Dorsolateral prefrontal cortex (tissue), 120 donors: ENCODE measurements at regions of chr12 and their contacts with region 1.

Region 1: GRCh38 chr12:108691175-108691997 is 39.9 kb downstream of the CORO1C start:
- DNase-seq: peak; percentile 76 to 99 (median 96)
- H3K4me3 ChIP-seq: peak overlapping the region in 58 of 59 donors; percentile 3 to 64 (median 41)
- H3K27ac ChIP-seq: peak overlapping the region; percentile 84 to 99 (median 95)
- H3K27me3 ChIP-seq: no peaks in the 10 kb centered on the region
- CTCF ChIP-seq: peak in 40 of 56 donors; percentile 9 to 59 (median 41)

Region 2: DNA sequence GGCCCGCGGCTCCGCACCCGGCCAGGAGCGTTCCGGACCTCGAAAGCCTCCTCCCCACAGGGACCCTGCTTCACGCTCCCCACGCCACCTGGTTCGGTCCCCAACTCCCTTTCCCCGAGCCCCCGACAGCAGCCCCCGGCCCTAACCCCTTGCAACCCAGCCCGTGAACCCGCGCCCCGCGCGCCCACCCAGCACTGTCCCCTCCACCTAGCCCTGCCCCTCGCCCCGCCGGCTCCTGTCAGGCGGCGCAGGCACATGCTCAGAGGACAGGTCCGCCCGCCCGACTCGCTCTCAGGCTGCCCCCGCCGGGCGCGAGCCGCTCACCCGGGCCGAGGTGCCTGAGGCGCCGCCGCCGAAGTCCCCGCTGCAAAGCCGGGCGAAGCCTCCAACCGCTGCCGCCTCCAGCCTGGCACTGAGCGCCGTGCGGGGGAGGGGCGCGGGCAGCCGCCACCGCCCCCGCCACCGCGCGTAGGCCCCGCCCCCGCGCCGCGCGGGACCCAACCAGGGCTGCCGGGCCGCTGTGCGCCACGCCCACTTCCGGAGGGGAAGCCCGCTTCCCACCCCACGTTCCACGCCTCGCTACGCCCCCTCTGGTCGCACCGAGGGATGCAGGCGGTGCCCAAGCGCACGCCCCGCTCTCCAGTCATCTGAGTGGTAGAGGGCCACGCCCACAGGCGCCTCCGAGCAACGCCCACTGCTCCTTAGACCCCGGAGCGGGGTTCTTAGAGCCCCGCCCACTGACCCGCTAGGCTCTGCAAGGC is 39.9 kb after region 1 on chr12 and contains the start of gene CORO1C:
- intact Hi-C with region 1: loop called (anchors 1 kb)
- DNase-seq: peak; percentile 85 to 96 (median 90)
- H3K4me3 ChIP-seq: peak within 1 kb of the TSS; percentile 64 to 97 (median 88)
- H3K27ac ChIP-seq: peak within 1 kb of the TSS; percentile 71 to 99 (median 95)
- H3K27me3 ChIP-seq: no peaks in the 10 kb centered on the region
- CTCF ChIP-seq: peak; percentile 48 to 93 (median 82)
- total RNA-seq, gene CORO1C: 87.2 to 202 (median 122) TPM

Region 3: DNA sequence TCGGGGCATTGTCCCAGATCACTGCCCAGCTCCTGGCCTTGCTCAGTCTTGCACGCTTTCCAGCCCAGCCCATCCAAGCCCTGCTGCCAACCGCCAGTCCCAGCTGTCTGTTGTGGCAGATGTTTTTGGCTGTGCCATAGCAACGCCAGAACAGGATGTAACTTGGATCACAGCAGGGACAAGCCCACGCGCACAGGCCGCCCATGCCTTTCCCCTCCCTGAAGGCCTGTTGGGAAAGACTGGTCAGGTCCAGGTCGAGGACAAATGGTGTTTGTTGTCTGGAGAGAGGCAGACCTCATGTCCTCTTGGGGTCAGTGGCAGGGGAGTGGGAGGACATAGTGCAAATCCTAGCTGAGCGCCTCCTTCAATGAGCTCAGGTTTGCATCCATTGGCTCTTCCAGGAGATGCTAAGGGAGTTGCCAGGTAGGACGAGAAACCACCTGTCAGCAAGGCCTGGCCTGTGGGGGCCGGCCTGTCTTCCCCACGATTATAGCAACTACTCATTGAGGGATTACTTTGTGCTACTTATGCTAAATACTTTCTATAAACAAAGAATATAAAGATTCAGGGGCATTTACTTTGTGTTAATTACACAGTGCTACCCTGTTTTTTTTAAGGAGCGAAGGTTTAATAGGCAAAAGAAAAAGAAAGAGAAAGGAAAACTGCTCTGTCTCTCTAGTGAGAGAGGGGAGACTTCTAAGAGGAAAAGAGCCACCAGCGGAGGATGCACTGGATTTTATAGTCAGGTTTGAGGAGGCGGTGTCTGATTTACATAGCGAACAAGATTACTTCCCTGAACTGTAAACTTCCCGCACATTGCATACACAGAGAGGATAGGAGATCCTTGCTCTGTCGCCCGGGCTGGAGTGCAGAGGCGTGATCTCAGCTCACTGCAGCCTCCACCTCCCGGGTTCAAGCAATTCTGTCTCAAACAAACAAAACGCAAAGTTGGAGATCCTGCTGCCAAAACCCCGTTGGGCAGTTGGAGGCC is 82.7 kb after region 1 on chr12:
- intact Hi-C with region 1: loop called in 1 of 2 experiments (anchors 10 kb)
- DNase-seq: peak in 9 of 10 donors; percentile 59 to 89 (median 81)
- H3K4me3 ChIP-seq: peak overlapping the region in 3 of 59 donors; percentile 6 to 12 (median 10)
- H3K27ac ChIP-seq: peak overlapping the region in 55 of 59 donors; percentile 15 to 87 (median 71)
- H3K27me3 ChIP-seq: no peaks in the 10 kb centered on the region
- CTCF ChIP-seq: no peak